ENCODE measurements at regions of chr2 and their contacts with region 1.

Region 1: GRCh38 chr2:65402323-65402722 is 30.1 kb downstream of the SPRED2 start:
- DNase-seq: no peak
- ATAC-seq: 0 out of 2 replicates have a peak, but pooled peaks have one; percentile 11
- H3K4me3 ChIP-seq: no peak overlapping the region
- H3K27ac ChIP-seq: no peak overlapping the region
- H3K4me1 ChIP-seq: peaks cover 17% of the 10 kb centered on the region
- H3K27me3 ChIP-seq: no peaks in the 10 kb centered on the region
- CTCF ChIP-seq: no peak

Region 2: GRCh38 chr2:64865073-64865830 is 537.1 kb before region 1 on chr2:
- CTCF ChIA-PET with region 1: no interaction called
- POLR2A ChIA-PET with region 1: no interaction called
- intact Hi-C with region 1: no loop called
- DNase-seq: peak; percentile 73
- ATAC-seq: peak; percentile 82
- H3K4me3 ChIP-seq: peak overlapping the region; percentile 68
- H3K27ac ChIP-seq: peak overlapping the region; percentile 81
- H3K4me1 ChIP-seq: peaks cover 35% of the 10 kb centered on the region
- H3K27me3 ChIP-seq: no peaks in the 10 kb centered on the region
- CTCF ChIP-seq: peak; percentile 68

Region 3: DNA sequence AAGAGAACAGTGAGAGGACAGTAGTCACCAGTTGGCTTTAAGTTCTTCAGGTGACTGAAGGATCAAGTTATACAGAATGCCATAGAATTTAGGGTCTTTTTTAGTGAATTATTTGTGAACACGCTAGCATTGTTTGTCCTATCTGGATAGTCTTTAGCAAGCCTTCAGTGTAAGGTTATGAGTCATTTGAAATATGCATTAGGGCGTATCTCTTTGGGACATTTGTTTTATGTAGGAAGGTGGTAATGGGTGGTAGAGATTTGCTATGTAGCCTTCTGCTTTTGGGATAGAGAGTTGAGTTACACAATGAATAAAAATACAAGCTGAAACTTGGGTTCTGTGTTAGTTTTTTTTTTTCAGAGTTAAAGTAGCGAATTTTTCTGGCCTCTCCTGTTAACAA is 161.7 kb before region 1 on chr2:
- CTCF ChIA-PET with region 1: no interaction called
- POLR2A ChIA-PET with region 1: interaction called, 14 read pairs
- intact Hi-C with region 1: no loop called
- DNase-seq: no peak
- ATAC-seq: peak; percentile 64
- H3K4me3 ChIP-seq: no peak overlapping the region
- H3K27ac ChIP-seq: no peak overlapping the region
- H3K4me1 ChIP-seq: peaks cover 5% of the 10 kb centered on the region; the same call in 1 of the 2 replicates
- H3K27me3 ChIP-seq: no peaks in the 10 kb centered on the region
- CTCF ChIP-seq: no peak

Region 4: GRCh38 chr2:65604245-65604644 is 201.9 kb after region 1 on chr2:
- CTCF ChIA-PET with region 1: no interaction called
- POLR2A ChIA-PET with region 1: no interaction called
- intact Hi-C with region 1: no loop called
- DNase-seq: peak; percentile 44
- ATAC-seq: peak; percentile 88
- H3K4me3 ChIP-seq: no peak overlapping the region
- H3K27ac ChIP-seq: no peak overlapping the region
- H3K4me1 ChIP-seq: peaks cover 8% of the 10 kb centered on the region
- H3K27me3 ChIP-seq: no peaks in the 10 kb centered on the region
- CTCF ChIP-seq: no peak